ENCODE measurements at regions of chr11 and their contacts with region 1.

Region 1: DNA sequence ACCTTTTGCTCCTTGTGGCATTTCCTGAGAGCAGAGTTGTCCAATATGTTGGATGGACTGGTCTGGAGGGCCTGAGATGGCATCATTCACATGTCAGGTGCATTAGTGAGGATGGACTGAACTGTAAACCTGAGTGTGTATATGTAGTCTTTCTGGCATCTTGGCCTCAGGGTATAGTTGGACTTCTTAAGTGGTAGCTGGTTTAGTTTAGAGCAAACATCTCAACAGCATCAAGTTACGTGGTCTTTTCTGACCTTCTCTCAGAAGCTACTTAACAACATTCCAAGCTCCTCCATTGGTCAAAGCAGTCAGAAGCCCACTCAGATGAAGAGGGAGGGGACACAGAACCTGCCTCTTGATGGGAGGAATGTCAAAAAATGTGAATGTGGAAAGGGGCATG is 829.9 kb downstream of the METTL15 start:
- DNase-seq: no peak
- ATAC-seq: no peak

Region 2: DNA sequence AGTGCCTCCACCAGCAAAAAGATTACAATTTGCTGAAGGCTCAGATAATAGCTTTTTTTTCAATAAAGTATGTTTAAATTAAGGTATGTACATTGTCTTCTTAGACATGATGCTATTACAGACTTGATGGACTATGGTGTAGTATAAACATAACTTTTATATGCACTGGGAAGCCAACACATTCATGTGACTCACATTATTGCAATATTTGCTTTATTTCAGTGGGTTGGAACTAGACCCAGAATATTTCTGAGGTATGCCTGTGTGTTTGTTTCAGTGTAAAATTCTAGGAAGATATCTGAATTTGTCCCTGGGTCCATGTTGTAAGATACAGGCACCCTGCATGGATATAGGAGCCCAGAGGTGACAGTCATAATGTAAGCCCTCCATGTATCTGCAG is 1117.8 kb before region 1 on chr11:
- intact Hi-C with region 1: loop called (anchors 10 kb)
- DNase-seq: no peak
- ATAC-seq: no peak

Region 3: DNA sequence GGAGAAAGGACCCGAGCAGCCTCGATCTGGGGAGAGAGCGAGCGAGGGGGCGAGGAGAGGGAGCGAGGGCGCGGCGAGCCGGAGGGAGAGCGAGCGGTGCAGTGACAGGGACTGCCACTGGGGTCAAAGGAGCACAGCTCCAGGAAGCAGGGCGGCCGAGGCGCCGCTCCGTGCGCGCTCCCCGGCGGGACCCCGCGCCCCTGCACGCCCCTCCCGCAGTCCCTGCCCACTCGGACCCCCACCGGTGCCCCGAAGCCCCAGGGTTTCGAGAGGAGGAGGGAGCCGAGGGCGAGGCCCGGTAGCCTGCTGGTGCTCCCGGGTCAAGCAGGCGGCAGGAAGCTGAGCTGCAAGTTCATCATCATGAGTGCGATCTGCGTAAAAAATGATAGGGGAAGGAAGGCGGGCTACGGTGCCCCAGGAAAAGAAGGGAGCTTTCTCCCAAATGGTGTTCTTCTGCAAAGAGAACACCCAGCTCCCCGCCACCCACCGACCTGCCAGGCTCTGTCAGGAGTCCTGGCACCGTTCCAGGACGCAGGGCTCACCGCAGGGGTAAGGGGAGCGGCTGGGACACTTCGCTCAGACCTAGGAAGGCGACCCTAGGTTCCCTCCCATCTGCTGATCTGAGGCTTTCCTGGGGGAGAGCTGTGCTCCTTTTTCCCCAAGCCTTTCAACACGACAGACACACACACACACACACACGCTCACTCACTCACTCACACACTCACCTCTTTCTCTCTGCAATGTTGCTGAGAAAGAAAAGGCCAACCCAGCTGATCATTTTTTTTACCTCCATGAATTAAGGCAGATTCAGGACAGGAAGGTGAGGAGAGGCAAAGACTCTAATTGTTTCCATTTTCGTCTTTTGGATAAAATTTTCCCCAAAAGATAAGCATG is 1648.4 kb after region 1 on chr11 and contains the start of gene MPPED2:
- intact Hi-C with region 1: no loop called
- DNase-seq: peak; percentile 63
- ATAC-seq: peak; percentile 59
- total RNA-seq, gene MPPED2: 8.0 TPM